ENCODE measurements at regions of chr7 and their contacts with region 1.

Region 1: DNA sequence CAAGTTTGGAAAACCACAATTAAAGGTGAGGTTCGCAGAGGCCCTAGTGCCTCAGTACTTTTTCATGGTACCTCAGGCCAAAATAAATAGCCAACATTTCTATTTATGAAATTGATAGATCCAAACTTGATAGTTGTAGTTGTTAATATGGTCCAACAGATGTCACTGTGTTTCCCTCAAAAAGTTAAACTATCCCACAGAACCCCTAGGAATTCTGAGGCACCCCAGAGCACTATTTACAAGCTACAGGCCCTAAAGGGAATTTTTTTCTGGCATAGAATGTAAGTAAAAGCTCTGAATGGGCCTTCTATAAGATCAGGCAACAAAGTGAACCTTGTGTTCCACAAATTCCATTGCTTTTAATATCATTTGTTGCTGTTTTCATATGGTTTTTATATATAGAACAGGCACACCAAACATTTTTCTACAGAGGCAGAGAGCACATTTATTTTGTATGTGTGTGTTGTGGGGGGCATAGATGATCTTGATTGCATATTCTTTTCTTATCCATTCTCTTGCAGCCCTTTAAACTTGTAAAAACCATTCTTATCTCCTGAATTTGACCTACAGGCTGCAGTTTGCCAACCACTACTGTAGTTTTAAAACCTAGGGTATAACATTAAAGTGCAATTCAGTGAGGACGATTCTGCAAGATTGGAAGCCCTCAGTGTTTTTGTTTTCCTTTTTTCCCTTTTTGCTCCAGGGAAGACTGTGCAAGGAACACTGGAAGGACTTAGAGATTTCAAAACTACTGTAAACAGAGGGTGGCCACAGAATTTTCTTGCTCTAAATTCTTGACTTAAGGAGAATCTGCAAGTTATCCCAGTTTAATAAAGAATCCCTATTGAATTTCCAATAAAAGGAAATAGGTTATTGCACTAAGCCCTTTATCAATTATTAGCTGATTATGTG is 3.5 kb upstream of the ARL4A start:
- DNase-seq: no peak

Region 2: DNA sequence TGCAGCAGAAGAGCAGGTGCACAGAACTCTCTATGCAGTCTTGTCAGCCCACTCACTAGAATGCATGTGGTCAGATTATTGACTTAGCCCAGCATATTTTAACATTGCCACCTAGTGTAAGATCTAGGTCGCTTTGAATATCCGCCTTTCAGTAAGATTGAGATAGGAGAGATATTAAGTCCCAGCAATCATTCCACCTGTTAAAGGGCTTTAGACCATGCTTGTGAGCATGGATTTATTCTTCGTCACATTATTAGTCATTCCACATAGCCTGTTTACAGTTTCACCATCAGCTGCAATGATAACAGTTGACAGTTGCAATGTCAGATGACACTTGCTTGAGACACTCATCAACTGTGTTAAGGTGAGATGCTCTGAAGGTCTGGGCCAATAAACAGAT is 495.2 kb after region 1 on chr7:
- intact Hi-C with region 1: loop called in 1 of 2 experiments (anchors 5 kb)
- DNase-seq: no peak

Region 3: GRCh38 chr7:13476881-13477444 is 793.0 kb after region 1 on chr7:
- intact Hi-C with region 1: no loop called
- DNase-seq: no peak

Measured in posterior vena cava (tissue), 2 donors.